Activated T-helper 1 cell treated with anti-CD3 and anti-CD28 coated beads, Interleukin-12 subunit alpha, Interleukin-12 subunit beta, Interleukin-2, Interleukin-4 antibody, amounts not matched to agents 30 ng/mL and 10 ng/mL and 1 ng/mL, durations not matched to agents 14 hours and 24 hours and 36 hours (primary cell): ENCODE measurements at regions of chr12 and their contacts with region 1.

Region 1: DNA sequence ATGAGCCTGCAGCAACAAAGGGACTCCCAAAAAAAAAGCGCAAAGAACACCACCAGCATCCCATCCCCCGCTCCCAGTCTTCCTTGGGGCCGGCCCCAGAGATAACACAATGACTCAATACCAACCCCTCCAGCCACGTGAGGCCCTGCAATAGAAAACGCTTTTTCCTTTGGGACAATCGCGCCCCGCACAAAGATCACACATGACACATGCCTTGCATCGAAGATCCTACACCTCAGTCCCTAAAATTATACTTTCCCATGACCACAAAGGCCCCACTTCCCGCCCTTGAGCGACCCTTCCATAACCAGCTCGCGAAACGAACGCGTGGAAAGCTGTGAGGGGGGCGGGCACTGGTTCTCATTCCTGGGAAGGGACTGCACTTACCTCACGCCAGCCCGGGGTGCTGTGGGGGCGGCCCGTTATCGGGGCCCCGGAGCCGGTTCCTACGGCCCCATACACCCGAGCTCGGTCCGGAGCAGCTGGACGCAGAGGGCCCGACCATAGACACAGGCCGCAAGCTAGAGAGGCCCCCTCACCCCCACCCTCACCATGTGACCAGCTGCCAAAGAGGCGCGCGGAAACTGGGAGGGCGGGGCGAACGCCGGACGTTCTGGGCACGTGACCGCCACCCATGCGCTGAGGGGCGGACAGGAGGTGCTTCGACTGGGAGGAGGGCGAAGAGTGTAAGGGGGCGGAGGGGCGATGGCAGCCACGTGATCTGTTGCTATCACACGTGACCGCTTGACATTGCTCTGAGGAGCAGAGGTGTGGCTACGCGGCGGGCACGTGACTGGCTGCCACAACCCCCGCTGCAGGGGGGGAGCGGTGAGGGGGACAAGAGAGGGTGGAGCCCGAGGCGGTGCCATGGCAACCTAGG is at the start of gene CDK4:
- DNase-seq: peak; percentile 98
- H3K4me3 Mint-ChIP-seq: peak within 1 kb of the TSS; percentile 94
- H3K27ac Mint-ChIP-seq: peak within 1 kb of the TSS; percentile 95
- H3K4me1 Mint-ChIP-seq: peaks cover 67% of the 10 kb centered on the region
- H3K27me3 Mint-ChIP-seq: peaks cover 3% of the 10 kb centered on the region
- total RNA-seq, gene CDK4: 218 and 227 TPM in 2 replicates

Region 2: GRCh38 chr12:56724972-56725722 is 1026.9 kb before region 1 on chr12 and contains the start of gene NACA:
- intact Hi-C with region 1: loop called (anchors 1 kb)
- DNase-seq: peak; percentile 98
- H3K4me3 Mint-ChIP-seq: peak within 1 kb of the TSS; percentile 91
- H3K27ac Mint-ChIP-seq: peak within 1 kb of the TSS; percentile 91
- H3K4me1 Mint-ChIP-seq: peaks cover 48% of the 10 kb centered on the region
- H3K27me3 Mint-ChIP-seq: peaks cover 1% of the 10 kb centered on the region
- total RNA-seq, gene NACA: 942 and 963 TPM in 2 replicates

Region 3: GRCh38 chr12:57698414-57698813 is 53.6 kb before region 1 on chr12:
- intact Hi-C with region 1: no loop called
- DNase-seq: no peak
- H3K4me3 Mint-ChIP-seq: no peak overlapping the region
- H3K27ac Mint-ChIP-seq: no peak overlapping the region
- H3K4me1 Mint-ChIP-seq: no peaks in the 10 kb centered on the region
- H3K27me3 Mint-ChIP-seq: no peaks in the 10 kb centered on the region

Region 4: DNA sequence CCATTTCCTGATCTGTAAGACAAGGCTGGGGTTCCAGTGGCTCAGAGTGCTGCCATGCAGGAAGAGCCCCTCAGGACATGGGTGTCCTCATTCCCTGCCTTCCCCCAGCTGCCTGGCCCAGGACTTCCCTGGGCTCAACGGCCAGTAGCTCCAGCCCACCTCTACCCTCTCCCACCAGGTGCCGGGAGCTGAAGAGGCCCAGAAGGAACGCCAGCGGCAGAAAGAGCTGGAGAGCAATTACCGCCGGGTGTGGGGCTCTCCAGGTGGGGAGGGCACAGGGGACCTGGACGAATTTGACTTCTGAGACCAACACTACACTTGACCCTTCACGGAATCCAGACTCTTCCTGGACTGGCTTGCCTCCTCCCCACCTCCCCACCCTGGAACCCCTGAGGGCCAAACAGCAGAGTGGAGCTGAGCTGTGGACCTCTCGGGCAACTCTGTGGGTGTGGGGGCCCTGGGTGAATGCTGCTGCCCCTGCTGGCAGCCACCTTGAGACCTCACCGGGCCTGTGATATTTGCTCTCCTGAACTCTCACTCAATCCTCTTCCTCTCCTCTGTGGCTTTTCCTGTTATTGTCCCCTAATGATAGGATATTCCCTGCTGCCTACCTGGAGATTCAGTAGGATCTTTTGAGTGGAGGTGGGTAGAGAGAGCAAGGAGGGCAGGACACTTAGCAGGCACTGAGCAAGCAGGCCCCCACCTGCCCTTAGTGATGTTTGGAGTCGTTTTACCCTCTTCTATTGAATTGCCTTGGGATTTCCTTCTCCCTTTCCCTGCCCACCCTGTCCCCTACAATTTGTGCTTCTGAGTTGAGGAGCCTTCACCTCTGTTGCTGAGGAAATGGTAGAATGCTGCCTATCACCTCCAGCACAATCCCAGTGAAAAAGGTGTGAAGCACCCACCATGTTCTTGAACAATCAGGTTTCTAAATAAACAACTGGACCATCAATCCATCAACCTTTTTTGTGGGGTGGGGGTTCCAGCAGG is 31.1 kb before region 1 on chr12:
- intact Hi-C with region 1: no loop called
- DNase-seq: no peak
- H3K4me3 Mint-ChIP-seq: no peak overlapping the region
- H3K27ac Mint-ChIP-seq: no peak overlapping the region
- H3K4me1 Mint-ChIP-seq: no peaks in the 10 kb centered on the region
- H3K27me3 Mint-ChIP-seq: no peaks in the 10 kb centered on the region

Region 5: GRCh38 chr12:57735952-57736740 is 15.9 kb before region 1 on chr12:
- intact Hi-C with region 1: no loop called
- DNase-seq: no peak
- H3K4me3 Mint-ChIP-seq: no peak overlapping the region
- H3K27ac Mint-ChIP-seq: peak overlapping the region; percentile 47
- H3K4me1 Mint-ChIP-seq: peaks cover 19% of the 10 kb centered on the region
- H3K27me3 Mint-ChIP-seq: no peaks in the 10 kb centered on the region

Region 6: DNA sequence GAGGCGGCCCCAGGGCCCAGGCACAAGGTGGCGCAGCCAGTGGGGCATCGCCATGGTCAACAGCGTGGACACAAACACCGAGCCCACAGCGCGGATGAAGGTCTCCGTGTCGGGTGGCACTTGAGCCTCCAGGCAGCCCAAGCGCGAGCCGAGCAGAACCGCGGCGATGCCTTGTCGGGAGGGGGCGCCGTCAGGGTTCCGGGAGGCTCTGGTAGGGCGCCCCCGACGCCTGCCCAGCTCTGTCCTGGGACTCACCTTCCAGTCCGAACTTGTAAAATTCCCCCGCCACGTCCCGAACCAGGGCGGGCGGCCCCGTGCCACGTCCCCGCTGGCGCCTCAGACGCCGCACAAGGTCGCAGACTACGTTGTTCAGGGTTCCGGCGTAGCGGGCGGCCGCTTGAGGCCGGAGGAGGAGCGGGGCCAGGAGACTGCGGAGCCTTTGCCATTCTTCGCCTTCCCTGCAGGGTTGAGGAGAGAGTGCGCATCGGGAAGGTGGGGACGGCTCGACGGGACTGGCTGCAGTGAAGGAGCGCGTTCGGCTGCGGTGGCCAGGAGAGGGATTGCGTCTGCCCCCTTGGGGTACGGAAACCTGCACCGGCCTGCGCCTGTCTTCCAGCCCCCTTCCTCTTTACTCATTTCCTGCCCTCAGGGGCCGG is 13.1 kb after region 1 on chr12:
- intact Hi-C with region 1: loop called (anchors 1 kb)
- DNase-seq: peak; percentile 44
- H3K4me3 Mint-ChIP-seq: peak overlapping the region; percentile 89
- H3K27ac Mint-ChIP-seq: peak overlapping the region; percentile 58
- H3K4me1 Mint-ChIP-seq: peaks cover 31% of the 10 kb centered on the region
- H3K27me3 Mint-ChIP-seq: peaks cover 5% of the 10 kb centered on the region

Region 7: DNA sequence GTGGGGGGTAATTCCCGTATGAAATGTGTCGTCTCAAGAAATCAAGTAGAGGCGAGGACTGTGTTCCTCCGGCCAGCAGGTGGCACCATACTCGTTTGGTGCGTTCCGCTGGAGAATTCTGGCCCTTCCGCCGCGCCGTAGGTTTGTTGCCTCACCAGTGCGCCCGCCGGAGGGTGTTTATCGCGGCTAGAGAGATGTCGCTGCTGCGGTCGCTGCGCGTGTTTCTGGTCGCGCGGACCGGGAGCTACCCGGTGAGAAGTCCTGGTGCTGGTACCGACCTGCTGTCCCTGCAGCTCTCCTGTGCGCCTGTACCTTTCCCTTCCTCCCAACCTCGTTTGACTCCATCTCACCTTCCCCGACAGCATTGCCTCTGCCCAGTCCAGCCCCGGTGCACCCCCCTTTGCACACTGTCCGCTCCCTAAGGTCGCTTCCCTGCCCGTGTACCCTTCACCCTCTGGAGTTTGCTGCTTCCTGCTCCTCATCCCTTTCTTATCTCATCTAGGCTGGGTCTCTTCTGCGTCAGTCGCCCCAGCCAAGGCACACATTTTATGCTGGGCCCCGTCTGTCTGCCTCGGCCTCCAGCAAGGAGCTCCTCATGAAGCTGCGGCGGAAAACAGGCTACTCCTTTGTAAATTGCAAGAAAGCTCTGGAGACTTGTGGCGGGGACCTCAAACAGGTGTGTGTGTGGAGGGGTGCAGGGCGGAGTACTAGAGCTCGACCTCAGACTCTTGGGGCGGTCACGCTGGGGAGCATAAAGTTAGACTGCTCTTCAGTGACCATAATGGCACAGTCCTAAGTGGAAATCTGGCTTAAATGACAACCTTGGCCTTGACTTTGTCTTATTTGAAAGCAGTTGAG is 30.8 kb after region 1 on chr12 and contains the start of gene TSFM:
- intact Hi-C with region 1: loop called (anchors 1 kb)
- DNase-seq: peak; percentile 93
- H3K4me3 Mint-ChIP-seq: peak within 1 kb of the TSS; percentile 98
- H3K27ac Mint-ChIP-seq: peak within 1 kb of the TSS; percentile 98
- H3K4me1 Mint-ChIP-seq: peaks cover 44% of the 10 kb centered on the region
- H3K27me3 Mint-ChIP-seq: no peaks in the 10 kb centered on the region
- total RNA-seq, gene TSFM: 63.5 and 68.6 TPM in 2 replicates

Region 8: GRCh38 chr12:57852620-57853500 is 100.8 kb after region 1 on chr12:
- intact Hi-C with region 1: no loop called
- DNase-seq: no peak
- H3K4me3 Mint-ChIP-seq: no peak overlapping the region
- H3K27ac Mint-ChIP-seq: no peak overlapping the region
- H3K4me1 Mint-ChIP-seq: peaks cover 9% of the 10 kb centered on the region
- H3K27me3 Mint-ChIP-seq: peaks cover 36% of the 10 kb centered on the region